ENCODE measurements at regions of chr17 and their contacts with region 1.

Region 1: DNA sequence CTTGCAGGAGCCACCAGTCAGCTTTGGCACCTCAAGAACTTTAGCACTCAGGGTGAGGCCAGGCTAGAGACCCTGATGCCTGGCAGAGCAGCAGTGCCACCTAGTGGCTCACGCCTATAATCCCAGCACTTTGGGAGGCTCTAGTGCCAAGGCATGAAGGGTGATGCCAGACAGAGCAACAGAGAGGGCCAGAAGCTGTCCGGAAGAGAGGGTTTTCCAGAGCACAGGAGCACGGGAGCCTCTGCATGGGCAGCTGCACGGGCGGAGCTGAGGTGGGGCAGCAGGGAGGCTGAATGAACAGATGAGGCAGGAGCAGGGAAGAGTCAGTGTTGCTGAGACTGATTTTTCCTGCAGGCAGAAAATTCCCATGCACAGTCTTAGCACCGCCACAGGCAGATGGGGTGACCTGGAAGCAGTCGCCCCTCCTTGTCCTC is 38.9 kb downstream of the MYH3 start:
- DNase-seq: peak in 4 of 5 donors; percentile 39 to 66 (median 44)
- ATAC-seq: peak; percentile 73 to 91 (median 90)
- H3K4me3 ChIP-seq: no peak overlapping the region
- H3K27ac ChIP-seq: no peak overlapping the region
- H3K4me1 ChIP-seq: peaks cover 0 to 15% (median 0%) of the 10 kb centered on the region in 12 donors
- H3K27me3 ChIP-seq: no peaks in the 10 kb centered on the region
- CTCF ChIP-seq: peak; percentile 75 to 89 (median 82)
- POLR2A ChIP-seq: no peak

Region 2: GRCh38 chr17:10295728-10296343 is 322.4 kb before region 1 on chr17:
- intact Hi-C with region 1: loop called in 3 of 10 experiments (anchors 10 kb)
- DNase-seq: peak in 3 of 5 donors; percentile 27 to 48 (median 37)
- ATAC-seq: peak in 3 of 4 donors; percentile 34 to 62 (median 59)
- H3K4me3 ChIP-seq: no peak overlapping the region
- H3K27ac ChIP-seq: no peak overlapping the region
- H3K4me1 ChIP-seq: peaks cover 0 to 10% (median 0%) of the 10 kb centered on the region in 12 donors
- H3K27me3 ChIP-seq: peaks cover 0 to 10% (median 0%) of the 10 kb centered on the region in 9 donors
- CTCF ChIP-seq: peak; percentile 36 to 66 (median 58)
- POLR2A ChIP-seq: no peak

Region 3: GRCh38 chr17:10327640-10328039 is 290.6 kb before region 1 on chr17:
- intact Hi-C with region 1: loop called (anchors 1 to 5 kb)
- DNase-seq: peak; percentile 50 to 81 (median 61)
- ATAC-seq: peak in 3 of 4 donors; percentile 68 to 74 (median 73)
- H3K4me3 ChIP-seq: no peak overlapping the region
- H3K27ac ChIP-seq: no peak overlapping the region
- H3K4me1 ChIP-seq: no peaks in the 10 kb centered on the region
- H3K27me3 ChIP-seq: peaks cover 0 to 5% (median 0%) of the 10 kb centered on the region in 9 donors
- CTCF ChIP-seq: peak; percentile 79 to 95 (median 86)
- POLR2A ChIP-seq: no peak

Region 4: GRCh38 chr17:10681866-10682446 is 63.7 kb after region 1 on chr17:
- intact Hi-C with region 1: no loop called
- DNase-seq: no peak
- ATAC-seq: no peak
- H3K4me3 ChIP-seq: no peak overlapping the region
- H3K27ac ChIP-seq: peak overlapping the region in 1 of 12 donors; percentile 0
- H3K4me1 ChIP-seq: no peaks in the 10 kb centered on the region
- H3K27me3 ChIP-seq: no peaks in the 10 kb centered on the region
- CTCF ChIP-seq: no peak
- POLR2A ChIP-seq: no peak

Measured in heart left ventricle (tissue), 16 donors.